ENCODE measurements at regions of chr17 and their contacts with region 1.

Region 1: DNA sequence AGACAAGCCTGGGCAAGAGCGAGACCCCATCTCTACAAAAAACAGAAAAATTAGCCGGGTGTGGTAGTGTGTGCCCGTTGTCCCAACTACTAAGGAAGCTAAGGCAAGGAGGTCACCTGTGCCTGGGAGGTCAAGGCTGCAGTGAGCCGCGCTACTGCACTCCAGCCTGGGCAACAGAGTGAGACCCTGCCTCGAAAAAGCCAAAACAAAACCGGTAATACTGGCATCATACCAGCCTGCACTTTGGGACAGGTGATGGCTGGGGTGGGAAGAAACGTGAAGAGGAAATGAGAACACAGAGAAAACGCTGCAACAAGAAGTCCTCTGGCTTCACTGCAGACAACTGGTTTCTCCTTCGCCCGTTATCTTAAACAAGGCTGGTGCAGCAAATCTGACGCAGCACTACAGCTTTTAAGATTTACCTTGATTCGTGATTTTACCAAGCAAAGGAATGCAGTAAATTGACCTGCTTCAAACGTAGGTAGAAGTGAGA is 725 bp upstream of the CASC3 start:
- DNase-seq: no peak
- H3K4me3 Mint-ChIP-seq: peak overlapping the region; percentile 85
- H3K27ac Mint-ChIP-seq: peak overlapping the region; percentile 98
- H3K4me1 Mint-ChIP-seq: peaks cover 42% of the 10 kb centered on the region
- H3K27me3 Mint-ChIP-seq: no peaks in the 10 kb centered on the region

Region 2: DNA sequence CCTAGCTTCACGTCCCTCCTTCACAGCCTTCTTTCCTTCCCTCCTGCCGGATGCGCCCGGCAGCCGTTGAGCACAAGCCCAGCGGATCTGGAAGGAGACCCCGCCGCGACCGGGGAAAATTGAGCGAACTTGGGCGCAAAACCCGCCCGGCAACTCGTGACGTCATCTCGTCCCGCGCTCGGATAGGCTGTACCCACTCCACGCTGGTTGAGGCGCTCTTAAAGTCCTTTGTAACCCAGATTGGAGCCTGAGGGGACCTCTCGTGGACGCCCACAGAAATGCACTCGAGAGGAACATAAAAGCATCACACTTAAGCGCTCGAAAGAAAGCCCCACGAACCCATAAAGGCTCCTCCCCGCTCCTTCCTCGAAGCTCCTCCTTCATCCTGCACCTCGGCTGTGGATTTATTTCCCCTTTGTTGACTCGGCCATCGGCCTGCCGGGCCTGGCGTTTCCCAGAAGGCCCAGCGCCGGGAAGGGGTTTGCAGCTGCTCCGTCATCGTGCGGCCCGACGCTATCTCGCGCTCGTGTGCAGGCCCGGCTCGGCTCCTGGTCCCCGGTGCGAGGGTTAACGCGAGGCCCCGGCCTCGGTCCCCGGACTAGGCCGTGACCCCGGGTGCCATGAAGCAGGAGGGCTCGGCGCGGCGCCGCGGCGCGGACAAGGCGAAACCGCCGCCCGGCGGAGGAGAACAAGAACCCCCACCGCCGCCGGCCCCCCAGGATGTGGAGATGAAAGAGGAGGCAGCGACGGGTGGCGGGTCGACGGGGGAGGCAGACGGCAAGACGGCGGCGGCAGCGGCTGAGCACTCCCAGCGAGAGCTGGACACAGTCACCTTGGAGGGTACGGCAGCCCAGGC is 159.0 kb before region 1 on chr17 and contains the start of gene PSMD3:
- CTCF ChIA-PET with region 1: no interaction called
- intact Hi-C with region 1: loop called (anchors 1 kb)
- DNase-seq: peak; percentile 99
- H3K4me3 Mint-ChIP-seq: peak within 1 kb of the TSS; percentile 88
- H3K27ac Mint-ChIP-seq: peak within 1 kb of the TSS; percentile 80
- H3K4me1 Mint-ChIP-seq: peaks cover 39% of the 10 kb centered on the region
- H3K27me3 Mint-ChIP-seq: peaks cover 2% of the 10 kb centered on the region
- total RNA-seq, gene PSMD3: 122 to 125 TPM

Region 3: GRCh38 chr17:40121181-40122135 is 18.2 kb before region 1 on chr17 and contains the start of gene MSL1:
- CTCF ChIA-PET with region 1: interaction called, 5 read pairs
- intact Hi-C with region 1: loop called (anchors 1 kb)
- DNase-seq: peak; percentile 86
- H3K4me3 Mint-ChIP-seq: peak within 1 kb of the TSS; percentile 92
- H3K27ac Mint-ChIP-seq: peak within 1 kb of the TSS; percentile 79
- H3K4me1 Mint-ChIP-seq: peaks cover 25% of the 10 kb centered on the region
- H3K27me3 Mint-ChIP-seq: no peaks in the 10 kb centered on the region
- total RNA-seq, gene MSL1: 72.1 to 72.2 TPM

Region 4: GRCh38 chr17:40157973-40158372 is 18.4 kb after region 1 on chr17:
- CTCF ChIA-PET with region 1: no interaction called
- intact Hi-C with region 1: loop called (anchors 1 kb)
- DNase-seq: no peak
- H3K4me3 Mint-ChIP-seq: no peak overlapping the region
- H3K27ac Mint-ChIP-seq: peak overlapping the region; percentile 39
- H3K4me1 Mint-ChIP-seq: peaks cover 33% of the 10 kb centered on the region
- H3K27me3 Mint-ChIP-seq: no peaks in the 10 kb centered on the region

Region 5: DNA sequence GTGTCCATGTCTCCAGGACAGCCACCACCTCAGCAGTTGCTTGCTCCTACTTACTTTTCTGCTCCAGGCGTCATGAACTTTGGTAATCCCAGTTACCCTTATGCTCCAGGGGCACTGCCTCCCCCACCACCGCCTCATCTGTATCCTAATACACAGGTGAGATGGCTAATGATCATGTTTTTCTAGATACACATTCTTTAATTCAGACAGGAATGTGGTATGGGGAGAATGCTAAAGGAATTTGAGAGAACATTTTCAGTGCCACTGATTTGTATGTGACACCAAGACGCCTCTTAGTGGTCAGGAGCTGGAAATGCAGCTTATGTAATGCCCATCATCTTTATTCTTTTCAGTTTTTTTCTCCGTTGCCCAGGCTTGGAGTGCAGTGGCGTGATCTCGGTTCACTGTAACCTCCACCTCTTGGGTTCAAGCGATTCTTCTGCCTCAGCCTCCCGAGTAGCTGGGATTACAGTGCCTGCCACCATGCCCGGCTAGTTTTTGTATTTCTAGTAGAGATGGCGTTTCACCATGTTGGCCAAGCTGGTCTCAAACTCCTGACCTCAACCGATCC is 28.7 kb after region 1 on chr17:
- CTCF ChIA-PET with region 1: interaction called, 16 read pairs
- intact Hi-C with region 1: no loop called
- DNase-seq: peak; percentile 44
- H3K4me3 Mint-ChIP-seq: no peak overlapping the region
- H3K27ac Mint-ChIP-seq: peak overlapping the region; percentile 77
- H3K4me1 Mint-ChIP-seq: peaks cover 7% of the 10 kb centered on the region
- H3K27me3 Mint-ChIP-seq: no peaks in the 10 kb centered on the region

Region 6: DNA sequence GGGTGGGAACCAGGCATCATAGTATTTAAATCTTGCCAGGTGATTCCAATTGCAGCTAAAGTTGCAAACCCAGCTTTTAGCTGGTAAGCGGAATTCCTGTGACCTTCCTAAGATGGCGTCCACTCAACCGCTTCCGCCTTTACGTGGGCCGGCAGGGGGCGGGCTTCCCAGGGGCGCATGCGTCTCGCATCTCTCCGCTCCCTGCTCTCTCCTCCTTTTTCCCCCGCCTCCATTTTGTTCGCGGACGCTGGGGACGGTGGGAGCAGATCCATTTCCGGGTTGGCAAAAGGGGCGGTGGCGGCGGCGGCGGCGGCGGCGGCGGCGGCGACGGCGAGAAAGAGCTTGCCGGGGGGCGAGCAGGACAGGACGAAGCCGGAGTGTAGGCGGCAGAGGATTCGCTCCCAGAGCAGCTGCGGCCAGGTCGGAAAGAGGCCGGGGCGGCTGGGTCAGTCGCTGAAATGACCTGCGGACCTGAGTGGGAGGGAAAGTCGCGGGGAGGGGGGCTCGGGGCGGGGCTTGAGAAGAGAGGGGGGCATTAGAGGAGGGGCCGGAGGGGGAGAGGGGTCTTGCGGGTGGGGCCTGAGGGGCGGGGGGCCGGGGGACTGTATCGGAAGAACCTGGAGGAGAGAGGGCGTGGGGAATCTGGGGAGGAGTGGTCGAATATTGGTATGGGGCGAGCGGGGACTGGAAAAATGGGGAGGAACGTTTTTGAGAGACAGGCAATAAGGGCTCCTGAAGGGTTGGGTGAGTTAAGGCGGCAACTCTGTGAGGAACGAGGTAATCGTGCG is 79.7 kb after region 1 on chr17 and contains the start of gene WIPF2:
- CTCF ChIA-PET with region 1: no interaction called
- intact Hi-C with region 1: loop called (anchors 2 kb)
- DNase-seq: peak; percentile 99
- H3K4me3 Mint-ChIP-seq: peak within 1 kb of the TSS; percentile 82
- H3K27ac Mint-ChIP-seq: peak within 1 kb of the TSS; percentile 95
- H3K4me1 Mint-ChIP-seq: peaks cover 24% of the 10 kb centered on the region
- H3K27me3 Mint-ChIP-seq: no peaks in the 10 kb centered on the region
- total RNA-seq, gene WIPF2: 12.3 to 13.0 TPM

Measured in activated naive CD4-positive, alpha-beta T cell treated with anti-CD3 and anti-CD28 coated beads for 36 hours (primary cell).